Activated naive CD4-positive, alpha-beta T cell treated with anti-CD3 and anti-CD28 coated beads for 36 hours (primary cell): ENCODE measurements at regions of chr1 and their contacts with region 1.

Region 1: DNA sequence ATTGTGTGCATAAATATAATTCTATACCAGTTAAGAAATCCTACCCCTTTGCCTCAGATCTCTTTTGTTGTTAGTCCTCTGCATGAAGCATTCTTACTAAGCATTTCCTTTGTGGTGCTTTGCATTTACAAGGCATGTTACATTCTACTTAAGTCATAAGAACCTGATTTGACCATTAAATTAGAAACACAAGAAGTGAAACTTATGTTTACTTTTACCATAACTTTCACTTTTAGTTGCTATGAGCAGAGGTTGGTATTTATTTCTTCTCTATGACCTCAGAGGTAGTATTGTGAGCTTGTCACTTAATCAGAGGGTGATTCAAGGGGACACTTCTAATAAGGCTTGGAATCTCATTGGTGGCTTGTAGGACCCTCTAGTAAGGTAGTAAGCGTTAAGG is 9.0 kb downstream of the FAM20B start:
- DNase-seq: no peak
- H3K4me3 Mint-ChIP-seq: no peak overlapping the region
- H3K27ac Mint-ChIP-seq: peak overlapping the region; percentile 77
- H3K4me1 Mint-ChIP-seq: peaks cover 85% of the 10 kb centered on the region
- H3K27me3 Mint-ChIP-seq: no peaks in the 10 kb centered on the region

Region 2: DNA sequence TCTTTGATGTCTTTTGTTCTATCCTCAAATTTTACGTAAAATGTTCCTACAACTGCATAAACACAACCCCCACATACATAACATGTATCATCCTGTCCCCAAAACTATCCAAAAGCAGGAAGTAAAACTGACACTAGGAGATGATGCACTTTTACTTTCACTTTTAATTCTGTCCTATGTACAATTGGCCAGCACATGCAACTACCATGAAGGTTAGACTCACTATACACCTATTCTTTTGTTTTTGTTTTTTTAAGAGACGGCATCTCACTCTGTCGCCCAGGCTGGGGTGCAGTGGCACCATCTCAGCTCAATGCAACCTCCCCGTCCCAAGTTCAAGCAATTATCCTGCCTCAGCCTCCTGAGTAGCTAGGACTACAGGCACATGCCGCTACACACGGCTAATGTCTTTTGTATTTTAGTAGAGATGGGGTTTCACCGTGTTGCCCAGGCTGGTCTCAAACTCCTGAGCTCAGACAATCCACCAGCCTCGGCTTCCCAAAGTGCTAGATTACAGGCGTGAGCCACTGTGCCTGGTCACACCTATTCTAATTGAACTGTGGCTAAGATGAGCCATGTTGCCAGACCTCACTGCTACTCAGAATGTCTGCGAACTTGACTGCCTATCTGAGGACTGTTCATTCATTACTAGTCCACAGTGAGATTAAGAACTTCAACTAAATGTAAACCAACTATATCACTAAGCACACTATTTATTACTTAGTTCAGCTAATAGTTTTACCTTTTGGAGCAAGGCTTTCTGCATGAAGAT is 95.2 kb after region 1 on chr1:
- CTCF ChIA-PET with region 1: no interaction called
- intact Hi-C with region 1: loop called (anchors 1 kb)
- DNase-seq: peak; percentile 24
- H3K4me3 Mint-ChIP-seq: peak overlapping the region; percentile 60
- H3K27ac Mint-ChIP-seq: peak overlapping the region; percentile 87
- H3K4me1 Mint-ChIP-seq: peaks cover 37% of the 10 kb centered on the region
- H3K27me3 Mint-ChIP-seq: no peaks in the 10 kb centered on the region

Region 3: GRCh38 chr1:179190861-179191260 is 156.1 kb after region 1 on chr1:
- CTCF ChIA-PET with region 1: no interaction called
- intact Hi-C with region 1: loop called (anchors 5 kb)
- DNase-seq: no peak
- H3K4me3 Mint-ChIP-seq: no peak overlapping the region
- H3K27ac Mint-ChIP-seq: no peak overlapping the region
- H3K4me1 Mint-ChIP-seq: peaks cover 20% of the 10 kb centered on the region
- H3K27me3 Mint-ChIP-seq: no peaks in the 10 kb centered on the region

Region 4: DNA sequence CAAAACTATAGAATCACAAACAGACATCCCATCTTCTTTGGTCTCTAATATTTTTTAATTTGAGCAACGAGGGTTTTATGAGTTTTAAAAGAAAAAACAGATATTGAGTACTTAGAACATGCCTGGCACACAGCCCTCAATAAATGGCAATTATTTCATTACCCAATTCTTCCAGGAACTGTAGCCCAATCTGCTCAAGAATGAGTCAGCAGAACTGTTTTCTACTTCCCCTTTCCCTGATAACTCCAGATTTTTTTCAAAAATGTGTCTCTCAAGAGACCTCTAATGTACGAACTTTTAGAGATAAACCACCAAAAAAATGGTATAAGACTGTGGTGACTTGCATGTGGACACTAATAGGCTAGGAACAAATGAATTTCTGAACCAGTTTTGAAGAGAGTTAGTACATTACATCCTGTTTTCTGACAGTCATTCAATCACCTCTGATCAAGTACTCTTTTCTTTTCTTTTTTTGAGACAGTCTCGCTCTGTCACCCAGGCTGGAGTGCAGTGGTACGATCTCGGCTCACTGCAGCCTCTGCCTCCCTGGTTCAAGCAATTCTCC is 183.3 kb after region 1 on chr1:
- CTCF ChIA-PET with region 1: no interaction called
- intact Hi-C with region 1: loop called (anchors 1 kb)
- DNase-seq: no peak
- H3K4me3 Mint-ChIP-seq: no peak overlapping the region
- H3K27ac Mint-ChIP-seq: no peak overlapping the region
- H3K4me1 Mint-ChIP-seq: peaks cover 20% of the 10 kb centered on the region
- H3K27me3 Mint-ChIP-seq: no peaks in the 10 kb centered on the region

Region 5: DNA sequence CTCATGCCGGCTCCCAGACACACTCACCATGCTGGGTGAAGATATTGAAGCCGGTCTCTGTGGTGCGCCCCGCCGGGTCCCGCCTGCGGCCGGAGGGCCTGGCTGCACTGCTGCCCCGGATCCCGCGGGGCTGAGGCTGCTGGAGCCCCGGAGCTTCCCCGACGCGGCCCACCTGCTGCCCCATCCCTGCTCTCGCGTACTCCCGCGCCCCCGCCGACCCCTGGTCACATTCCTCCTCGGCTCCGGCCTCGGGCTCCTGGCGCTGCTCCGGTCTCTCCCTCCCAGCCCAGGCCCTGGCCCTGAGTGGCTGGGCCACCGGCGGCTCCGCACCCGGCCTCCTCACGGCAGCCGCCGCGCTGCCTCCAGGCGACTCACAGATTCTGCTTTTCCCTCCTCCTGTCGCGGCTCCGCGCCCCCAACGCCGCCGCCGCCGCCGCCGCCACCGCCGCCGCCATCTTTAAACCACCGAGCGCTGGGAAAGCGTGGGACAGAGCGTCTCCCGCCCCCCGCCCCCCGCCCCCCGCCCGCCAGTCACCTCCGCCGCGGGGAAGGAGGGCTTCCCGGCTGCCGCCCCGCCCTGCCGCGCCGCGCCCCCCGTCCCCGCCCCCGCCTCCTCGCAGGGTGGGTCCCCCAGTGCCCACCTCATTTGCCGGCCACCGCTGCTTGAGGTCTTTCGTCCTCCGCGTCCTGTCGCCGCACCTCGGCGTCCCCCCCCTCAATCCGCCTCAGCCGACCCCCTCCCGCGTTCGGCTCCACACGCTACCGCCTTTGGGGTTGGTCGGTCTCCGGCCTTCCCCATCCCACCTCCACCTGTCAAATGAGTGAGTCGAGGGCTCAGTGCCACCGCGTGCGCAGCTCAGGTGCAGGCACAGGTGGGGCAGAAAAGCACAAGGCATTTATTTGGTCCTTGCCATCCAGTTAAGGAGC is 194.8 kb after region 1 on chr1 and contains the start of gene ABL2:
- CTCF ChIA-PET with region 1: no interaction called
- intact Hi-C with region 1: loop called (anchors 1 kb)
- DNase-seq: peak; percentile 49
- H3K4me3 Mint-ChIP-seq: peak within 1 kb of the TSS; percentile 90
- H3K27ac Mint-ChIP-seq: peak within 1 kb of the TSS; percentile 85
- H3K4me1 Mint-ChIP-seq: peaks cover 31% of the 10 kb centered on the region
- H3K27me3 Mint-ChIP-seq: no peaks in the 10 kb centered on the region
- total RNA-seq, gene ABL2: 8.1 TPM

Region 6: GRCh38 chr1:179298952-179299351 is 264.2 kb after region 1 on chr1:
- CTCF ChIA-PET with region 1: no interaction called
- intact Hi-C with region 1: loop called (anchors 1 kb)
- DNase-seq: peak; percentile 77
- H3K4me3 Mint-ChIP-seq: peak overlapping the region; percentile 57
- H3K27ac Mint-ChIP-seq: peak overlapping the region; percentile 78
- H3K4me1 Mint-ChIP-seq: peaks cover 74% of the 10 kb centered on the region
- H3K27me3 Mint-ChIP-seq: no peaks in the 10 kb centered on the region

Region 7: DNA sequence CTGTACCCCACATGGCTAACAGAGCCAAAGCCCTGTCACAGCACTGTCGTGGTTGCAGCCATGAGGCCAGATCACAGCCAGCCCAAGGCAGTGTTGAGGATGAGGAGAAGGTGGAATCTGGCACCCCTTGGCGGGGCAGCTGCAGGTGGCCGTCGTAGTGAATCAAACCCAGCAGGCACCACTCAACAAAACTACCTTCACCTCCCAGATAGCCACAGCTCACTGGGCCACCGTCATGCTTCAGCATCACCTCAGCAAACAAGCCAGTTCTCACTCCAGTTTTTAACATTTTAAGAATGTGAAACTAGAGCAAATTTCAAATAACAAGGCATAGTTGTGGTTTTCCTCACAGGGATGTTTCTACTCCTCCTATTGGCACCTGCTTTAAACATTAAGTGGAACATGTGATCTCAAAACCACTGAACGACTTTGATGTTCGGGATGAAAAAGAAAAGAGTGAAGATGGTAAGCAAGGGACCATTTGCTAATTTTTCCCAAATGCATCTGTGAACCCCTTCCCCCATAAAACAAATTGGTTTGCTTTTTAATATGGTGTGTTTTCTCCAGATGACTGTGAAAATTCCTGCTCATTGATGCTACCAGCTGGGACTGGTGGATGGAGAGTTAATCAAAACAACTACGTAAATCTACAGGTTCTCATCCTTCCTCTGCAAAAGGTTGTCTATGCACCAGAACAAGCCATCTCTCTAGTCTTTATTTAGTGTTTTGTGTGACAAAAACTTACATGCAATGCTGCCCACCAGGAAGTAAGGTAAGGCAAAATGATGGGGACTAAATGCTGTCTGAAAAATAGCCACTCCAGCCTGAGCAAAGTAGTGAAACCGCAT is 797.4 kb after region 1 on chr1:
- CTCF ChIA-PET with region 1: no interaction called
- intact Hi-C with region 1: no loop called
- DNase-seq: peak; percentile 57
- H3K4me3 Mint-ChIP-seq: no peak overlapping the region
- H3K27ac Mint-ChIP-seq: peak overlapping the region; percentile 15
- H3K4me1 Mint-ChIP-seq: peaks cover 30% of the 10 kb centered on the region
- H3K27me3 Mint-ChIP-seq: no peaks in the 10 kb centered on the region

Region 8: GRCh38 chr1:180154325-180155181 is 1119.8 kb after region 1 on chr1 and contains the start of gene QSOX1:
- CTCF ChIA-PET with region 1: no interaction called
- intact Hi-C with region 1: loop called (anchors 10 kb)
- DNase-seq: peak; percentile 91
- H3K4me3 Mint-ChIP-seq: peak within 1 kb of the TSS; percentile 89
- H3K27ac Mint-ChIP-seq: peak within 1 kb of the TSS; percentile 67
- H3K4me1 Mint-ChIP-seq: peaks cover 22% of the 10 kb centered on the region
- H3K27me3 Mint-ChIP-seq: no peaks in the 10 kb centered on the region
- total RNA-seq, gene QSOX1: 27.6 to 31.9 TPM